Right lobe of liver (tissue), 6 donors: ENCODE measurements at regions of chr5 and their contacts with region 1.

Region 1: GRCh38 chr5:44329716-44330115 is 59.5 kb downstream of the FGF10 start:
- DNase-seq: no peak
- ATAC-seq: no peak
- H3K4me3 ChIP-seq: no peak overlapping the region
- H3K27ac ChIP-seq: no peak overlapping the region
- H3K4me1 ChIP-seq: no peaks in the 10 kb centered on the region
- H3K27me3 ChIP-seq: no peaks in the 10 kb centered on the region
- CTCF ChIP-seq: no peak
- POLR2A ChIP-seq: no peak

Region 2: GRCh38 chr5:43729846-43730478 is 599.8 kb before region 1 on chr5:
- intact Hi-C with region 1: loop called in 1 of 2 experiments (anchors 10 kb)
- DNase-seq: no peak
- ATAC-seq: peak in 3 of 4 donors; percentile 49 to 65 (median 56)
- H3K4me3 ChIP-seq: no peak overlapping the region
- H3K27ac ChIP-seq: no peak overlapping the region
- H3K4me1 ChIP-seq: no peaks in the 10 kb centered on the region
- H3K27me3 ChIP-seq: no peaks in the 10 kb centered on the region
- CTCF ChIP-seq: peak; percentile 58 to 66 (median 64)
- POLR2A ChIP-seq: no peak